Cardiac septum (tissue), 1 donor: ENCODE measurements at regions of chr2 and their contacts with region 1.

Region 1: GRCh38 chr2:54360055-54360792 is 95.9 kb upstream of the SPTBN1 start:
- DNase-seq: no peak

Region 2: GRCh38 chr2:54336136-54336976 is 23.9 kb before region 1 on chr2:
- intact Hi-C with region 1: loop called (anchors 2 kb)
- DNase-seq: no peak

Region 3: DNA sequence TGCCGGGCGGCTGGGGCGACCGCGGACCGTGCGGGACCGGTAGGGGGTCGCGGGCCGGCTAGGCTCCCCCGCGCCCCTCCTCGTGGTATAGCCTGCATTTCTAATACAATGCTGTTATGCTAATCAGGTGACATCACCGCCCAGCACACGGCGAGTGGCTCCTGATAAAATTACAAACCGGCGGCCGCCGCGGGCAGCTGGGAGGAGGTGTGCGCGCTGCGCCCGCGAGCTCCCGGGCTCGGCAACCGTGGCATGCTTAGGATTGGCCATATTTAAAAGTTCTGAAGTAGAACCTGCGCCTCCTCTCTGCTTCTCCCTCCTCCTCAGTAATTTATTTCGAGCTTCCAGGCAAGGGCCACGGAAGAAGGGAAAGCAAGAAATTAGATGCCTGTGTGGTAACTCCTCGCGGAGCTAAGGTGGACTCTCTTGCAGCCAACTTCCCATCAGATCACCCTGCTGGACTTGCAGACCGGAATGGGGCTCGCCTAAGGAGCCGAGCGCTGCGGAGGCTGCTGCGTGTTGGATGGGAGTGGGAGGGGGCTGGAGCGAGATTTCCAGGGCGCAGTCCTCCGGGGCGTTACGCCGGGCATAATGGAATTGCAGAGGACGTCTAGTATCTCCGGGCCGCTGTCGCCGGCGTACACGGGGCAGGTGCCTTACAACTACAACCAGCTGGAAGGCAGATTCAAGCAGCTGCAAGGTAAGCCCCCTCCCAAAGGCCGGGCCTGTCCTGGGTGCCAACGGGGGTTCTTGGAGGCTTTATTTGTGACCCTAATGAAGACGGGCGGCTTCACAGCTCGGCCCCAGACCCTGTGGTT is 198.2 kb after region 1 on chr2:
- intact Hi-C with region 1: no loop called
- DNase-seq: peak; percentile 79